Posterior vena cava (tissue), 2 donors: ENCODE measurements at regions of chrX and their contacts with region 1.

Region 1: GRCh38 chrX:31126205-31126604 is 54.4 kb upstream of the FTHL17 start:
- DNase-seq: no peak

Region 2: GRCh38 chrX:32370456-32371205 is 1244.4 kb after region 1 on chrX:
- intact Hi-C with region 1: loop called in 1 of 2 experiments (anchors 10 kb)
- DNase-seq: no peak